ENCODE measurements at regions of chr11 and their contacts with region 1.

Region 1: GRCh38 chr11:116791002-116791812 is 472 bp downstream of the APOA5 start:
- DNase-seq: peak; percentile 94

Region 2: DNA sequence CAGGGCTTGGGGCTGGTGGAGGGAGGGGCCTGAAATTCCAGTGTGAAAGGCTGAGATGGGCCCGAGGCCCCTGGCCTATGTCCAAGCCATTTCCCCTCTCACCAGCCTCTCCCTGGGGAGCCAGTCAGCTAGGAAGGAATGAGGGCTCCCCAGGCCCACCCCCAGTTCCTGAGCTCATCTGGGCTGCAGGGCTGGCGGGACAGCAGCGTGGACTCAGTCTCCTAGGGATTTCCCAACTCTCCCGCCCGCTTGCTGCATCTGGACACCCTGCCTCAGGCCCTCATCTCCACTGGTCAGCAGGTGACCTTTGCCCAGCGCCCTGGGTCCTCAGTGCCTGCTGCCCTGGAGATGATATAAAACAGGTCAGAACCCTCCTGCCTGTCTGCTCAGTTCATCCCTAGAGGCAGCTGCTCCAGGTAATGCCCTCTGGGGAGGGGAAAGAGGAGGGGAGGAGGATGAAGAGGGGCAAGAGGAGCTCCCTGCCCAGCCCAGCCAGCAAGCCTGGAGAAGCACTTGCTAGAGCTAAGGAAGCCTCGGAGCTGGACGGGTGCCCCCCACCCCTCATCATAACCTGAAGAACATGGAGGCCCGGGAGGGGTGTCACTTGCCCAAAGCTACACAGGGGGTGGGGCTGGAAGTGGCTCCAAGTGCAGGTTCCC is 38.4 kb after region 1 on chr11 and contains the start of gene APOC3:
- intact Hi-C with region 1: loop called in 1 of 2 experiments (anchors 5 kb)
- DNase-seq: no peak
- total RNA-seq, gene APOC3: not detected

Region 3: DNA sequence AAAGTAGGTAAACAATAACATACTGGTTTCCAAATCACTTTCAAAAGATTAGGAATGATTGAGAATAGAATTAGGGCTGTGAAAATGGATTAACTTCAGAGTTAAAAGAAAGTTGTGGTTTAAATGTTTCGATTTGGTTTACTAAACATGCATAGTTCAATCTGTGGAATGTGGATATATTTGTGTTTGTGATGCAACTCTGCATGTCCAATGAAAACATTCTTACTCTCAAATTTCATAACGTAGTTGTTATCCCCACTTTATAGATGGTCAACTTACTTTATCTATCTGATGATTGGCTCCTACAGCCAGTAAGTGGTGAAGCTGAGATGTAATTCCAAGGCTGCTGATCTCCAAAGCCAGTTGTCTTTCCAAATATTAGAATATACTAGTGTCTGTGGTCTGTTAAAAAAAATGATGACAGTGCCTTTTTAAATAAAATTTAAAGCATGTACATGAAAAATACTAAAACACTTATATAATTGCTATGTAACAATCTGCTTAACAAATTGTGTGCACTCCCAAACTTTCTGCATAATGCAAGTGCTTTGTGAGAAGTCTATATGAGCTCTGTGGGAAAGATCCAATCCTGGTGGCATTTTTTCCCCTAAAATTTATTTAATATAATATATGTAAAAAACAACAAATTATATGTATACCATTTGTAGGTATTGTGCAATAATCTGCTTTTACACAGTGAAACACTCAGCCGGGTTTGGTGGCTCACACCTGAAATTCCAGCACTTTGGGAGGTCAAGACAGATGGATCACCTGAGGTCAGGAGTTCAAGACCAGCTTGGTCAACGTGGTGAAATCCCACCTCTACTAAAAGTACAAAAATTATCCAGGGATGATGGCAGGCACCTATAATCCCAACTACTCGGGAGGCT is 316.7 kb after region 1 on chr11:
- intact Hi-C with region 1: loop called (anchors 10 kb)
- DNase-seq: no peak

Region 4: DNA sequence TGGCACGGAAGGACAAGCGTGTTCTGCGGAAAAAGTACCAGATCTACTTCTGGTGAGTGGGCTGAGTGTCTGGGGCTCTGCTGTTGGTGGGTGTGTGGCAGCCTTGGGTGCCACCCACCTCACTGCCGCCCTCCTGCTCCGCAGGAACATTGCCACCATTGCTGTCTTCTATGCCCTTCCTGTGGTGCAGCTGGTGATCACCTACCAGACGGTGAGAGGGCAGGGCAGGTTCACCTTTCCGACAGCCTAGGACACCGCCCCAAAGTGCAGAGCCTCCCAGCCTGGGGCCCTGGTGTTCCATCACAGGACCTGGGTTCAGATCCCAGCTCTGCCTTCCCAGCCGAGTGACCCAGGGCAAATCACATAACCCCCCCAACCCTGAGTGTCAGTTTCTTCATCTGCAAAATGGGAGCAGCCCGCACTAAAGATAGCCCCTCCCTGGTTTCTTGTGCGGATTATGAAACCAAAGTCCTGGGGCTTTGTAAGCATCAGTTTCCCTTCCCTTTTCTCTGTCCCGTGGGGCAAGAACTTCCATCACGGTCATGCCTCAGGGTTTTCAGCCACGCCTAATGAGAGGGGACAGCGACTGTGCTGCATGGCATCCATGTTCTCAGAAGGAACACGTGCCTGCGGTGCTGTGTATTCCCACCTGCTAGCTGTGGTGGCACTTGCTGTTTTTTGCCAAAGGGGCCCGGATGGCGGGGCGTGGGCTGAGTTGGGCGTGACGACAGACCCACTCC is 398.2 kb after region 1 on chr11:
- intact Hi-C with region 1: no loop called
- DNase-seq: peak; percentile 80

Region 5: GRCh38 chr11:117226388-117227385 is 435.5 kb after region 1 on chr11:
- intact Hi-C with region 1: loop called in 1 of 2 experiments (anchors 10 kb)
- DNase-seq: peak; percentile 81

Measured in posterior vena cava (tissue), 2 donors.